ENCODE measurements at regions of chr1 and their contacts with region 1.

Region 1: GRCh38 chr1:113904674-113905434 is at the starts of genes AP4B1 and DCLRE1B:
- DNase-seq: peak; percentile 100
- H3K4me3 ChIP-seq: peak within 1 kb of the TSS; percentile 67 to 81 (median 73)
- H3K27ac ChIP-seq: peak within 1 kb of the TSS; percentile 87 to 95 (median 92)
- H3K4me1 ChIP-seq: peaks cover 0 to 23% (median 21%) of the 10 kb centered on the region in 4 donors
- H3K27me3 ChIP-seq: no peaks in the 10 kb centered on the region
- CTCF ChIP-seq: peak; percentile 64 to 82 (median 77)
- EP300 ChIP-seq: peak in 2 of 4 donors; percentile 30 to 51
- POLR2A ChIP-seq: peak; percentile 55 to 74
- total RNA-seq, gene AP4B1: 6.2 to 15.5 (median 10.8) TPM
- total RNA-seq, gene DCLRE1B: 4.3 to 4.9 (median 4.4) TPM

Region 2: DNA sequence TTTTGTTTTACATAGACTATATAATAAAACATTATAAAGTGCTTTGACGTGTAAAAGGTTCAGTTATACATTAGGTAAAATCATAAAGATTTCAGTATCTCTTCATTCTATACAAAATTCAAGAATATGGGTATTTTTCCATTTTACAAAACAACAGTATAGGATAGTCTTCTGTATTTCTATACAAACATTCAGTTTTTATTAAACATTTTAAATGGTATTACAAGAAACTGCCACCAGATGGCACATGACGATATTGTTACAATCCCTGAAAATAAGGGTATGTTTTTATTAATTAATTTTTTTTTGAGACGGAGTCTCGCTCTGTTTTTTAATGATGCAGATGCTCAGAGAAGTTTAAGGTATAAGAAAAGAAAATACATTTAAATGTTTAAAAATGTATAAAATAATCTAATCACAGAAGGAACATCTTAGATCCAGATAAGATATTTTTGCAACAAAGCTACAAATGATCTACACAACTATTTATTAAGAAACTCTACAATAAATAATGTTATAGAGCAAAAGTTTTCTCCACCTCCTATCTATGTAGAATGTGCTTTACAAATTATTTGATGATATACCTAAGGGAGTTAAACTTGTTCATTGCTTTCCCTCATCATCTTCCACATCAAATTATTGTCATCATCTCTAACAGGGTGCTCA is 69.1 kb before region 1 on chr1:
- intact Hi-C with region 1: loop called (anchors 2 kb)
- DNase-seq: no peak
- H3K4me3 ChIP-seq: no peak overlapping the region
- H3K27ac ChIP-seq: no peak overlapping the region
- H3K4me1 ChIP-seq: peaks cover 0 to 7% (median 0%) of the 10 kb centered on the region in 4 donors
- H3K27me3 ChIP-seq: no peaks in the 10 kb centered on the region
- CTCF ChIP-seq: peak in 3 of 4 experiments; percentile 35 to 61 (median 43)
- EP300 ChIP-seq: no peak
- POLR2A ChIP-seq: no peak

Region 3: GRCh38 chr1:113928941-113929749 is 24.3 kb after region 1 on chr1 and contains the start of gene HIPK1:
- intact Hi-C with region 1: loop called (anchors 1 kb)
- DNase-seq: peak; percentile 95
- H3K4me3 ChIP-seq: peak within 1 kb of the TSS; percentile 70 to 92 (median 85)
- H3K27ac ChIP-seq: peak within 1 kb of the TSS; percentile 94 to 99 (median 97)
- H3K4me1 ChIP-seq: peaks cover 0 to 51% (median 39%) of the 10 kb centered on the region in 4 donors
- H3K27me3 ChIP-seq: no peaks in the 10 kb centered on the region
- CTCF ChIP-seq: peak in 1 of 4 experiments; percentile 17
- EP300 ChIP-seq: no peak
- POLR2A ChIP-seq: peak; percentile 45 to 63
- total RNA-seq, gene HIPK1: 47.2 to 57.1 (median 49.9) TPM

Region 4: GRCh38 chr1:114152508-114153260 is 247.8 kb after region 1 on chr1:
- intact Hi-C with region 1: no loop called
- DNase-seq: peak; percentile 75
- H3K4me3 ChIP-seq: peak overlapping the region; percentile 24 to 53 (median 42)
- H3K27ac ChIP-seq: no peak overlapping the region
- H3K4me1 ChIP-seq: peaks cover 0 to 35% (median 30%) of the 10 kb centered on the region in 4 donors
- H3K27me3 ChIP-seq: peaks cover 39 to 88% (median 75%) of the 10 kb centered on the region in 3 donors
- CTCF ChIP-seq: no peak
- EP300 ChIP-seq: no peak
- POLR2A ChIP-seq: no peak

Measured in sigmoid colon (tissue), 7 donors.